Spleen (tissue), 13 donors: ENCODE measurements at regions of chr6 and their contacts with region 1.

Region 1: GRCh38 chr6:136317021-136317694 is 27.5 kb upstream of the BCLAF1 start:
- DNase-seq: no peak
- H3K4me3 ChIP-seq: no peak overlapping the region
- H3K27ac ChIP-seq: no peak overlapping the region
- H3K4me1 ChIP-seq: no peaks in the 10 kb centered on the region
- H3K27me3 ChIP-seq: no peaks in the 10 kb centered on the region
- CTCF ChIP-seq: peak; percentile 56 to 77 (median 71)
- POLR2A ChIP-seq: no peak

Region 2: DNA sequence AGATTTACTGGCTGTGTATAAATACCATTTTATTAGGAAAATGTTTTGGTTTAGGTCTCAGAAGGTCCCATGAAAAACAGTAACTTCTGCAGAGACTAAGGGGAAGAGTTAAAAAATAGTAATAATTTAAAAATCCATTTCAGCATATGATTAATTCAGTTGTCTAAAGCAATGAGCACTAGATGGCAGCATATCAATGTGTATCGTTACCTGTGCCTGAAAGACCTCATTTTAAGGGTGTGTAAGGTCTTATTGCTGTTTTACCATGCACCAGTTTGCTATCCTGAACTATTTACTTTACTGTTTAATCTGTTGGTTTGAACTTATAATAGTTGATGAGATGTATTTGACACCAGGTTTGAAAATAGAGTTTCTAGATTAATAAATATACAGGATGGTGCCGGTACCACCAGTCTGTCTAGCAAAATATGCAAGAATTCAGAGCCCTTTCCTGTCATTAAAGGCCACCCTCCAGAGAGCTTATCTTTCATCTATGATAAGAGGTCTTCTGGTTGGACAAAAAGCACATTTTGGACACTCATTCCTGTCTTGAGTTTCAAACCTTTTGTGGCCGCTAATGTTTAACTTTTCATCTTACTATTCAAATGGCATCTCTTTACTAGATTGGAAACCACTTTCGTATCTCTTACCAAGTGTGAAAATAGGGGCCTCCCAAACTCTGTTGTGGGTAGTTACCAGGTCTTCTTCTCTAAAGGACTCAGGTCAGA is 810.7 kb before region 1 on chr6:
- intact Hi-C with region 1: loop called (anchors 10 kb)
- DNase-seq: no peak
- H3K4me3 ChIP-seq: no peak overlapping the region
- H3K27ac ChIP-seq: no peak overlapping the region
- H3K4me1 ChIP-seq: peaks cover 0 to 7% (median 2%) of the 10 kb centered on the region in 6 donors
- H3K27me3 ChIP-seq: no peaks in the 10 kb centered on the region
- CTCF ChIP-seq: peak in 10 of 11 experiments; percentile 16 to 60 (median 49)
- POLR2A ChIP-seq: no peak

Region 3: DNA sequence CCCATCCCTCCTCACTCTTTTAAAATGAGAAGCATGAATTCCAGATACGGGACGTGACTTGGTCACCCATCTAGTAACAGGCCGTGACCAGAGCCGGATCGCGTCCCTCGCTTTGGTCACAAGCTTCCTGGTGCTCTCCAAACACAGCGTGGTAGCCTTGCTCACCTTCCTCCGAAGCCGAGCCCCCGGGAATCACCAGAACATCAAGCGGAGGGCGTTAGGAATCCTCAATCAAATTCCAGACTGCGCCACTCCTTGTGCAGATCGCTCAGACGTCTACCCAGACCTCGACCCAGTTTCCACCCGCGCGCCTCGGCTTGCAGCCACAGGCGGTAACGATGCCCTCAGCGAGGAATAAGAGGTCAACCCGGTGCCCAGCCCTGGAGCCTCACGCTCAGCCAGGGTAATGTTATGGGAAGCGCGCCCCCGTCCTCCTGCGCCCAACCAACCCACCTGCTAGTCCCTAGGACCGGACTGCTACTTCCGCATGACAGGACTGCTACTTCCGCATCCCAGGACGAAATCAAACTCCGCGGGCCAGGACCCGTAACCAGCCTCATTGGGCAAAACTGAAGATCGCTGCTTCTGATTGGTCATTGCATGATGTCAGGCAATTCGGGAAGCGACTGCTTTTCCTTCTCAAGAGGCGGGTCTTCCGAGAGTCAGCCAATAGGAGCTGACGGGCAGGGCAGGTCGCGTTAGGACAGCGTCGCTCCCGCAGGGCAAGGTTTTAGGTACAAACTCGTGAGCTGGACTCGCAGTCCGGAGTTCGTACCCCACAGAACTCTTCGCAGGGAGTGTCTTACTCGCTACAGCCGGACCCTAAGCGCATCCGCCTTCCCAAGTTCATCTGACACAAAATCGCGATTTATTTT is 67.1 kb before region 1 on chr6 and contains the start of gene MTFR2:
- intact Hi-C with region 1: no loop called
- DNase-seq: peak; percentile 96
- H3K4me3 ChIP-seq: peak within 1 kb of the TSS; percentile 69 to 97 (median 84)
- H3K27ac ChIP-seq: peak within 1 kb of the TSS in 5 of 8 donors; percentile 35 to 78 (median 57)
- H3K4me1 ChIP-seq: peaks cover 3 to 31% (median 20%) of the 10 kb centered on the region in 6 donors
- H3K27me3 ChIP-seq: no peaks in the 10 kb centered on the region
- CTCF ChIP-seq: peak in 2 of 11 experiments; percentile 15 to 25
- POLR2A ChIP-seq: no peak
- total RNA-seq, gene MTFR2: 1.6 to 4.6 (median 2.6) TPM